ENCODE measurements at regions of chr20 and their contacts with region 1.

Region 1: GRCh38 chr20:51306503-51307358 is 235.8 kb downstream of the NFATC2 start:
- DNase-seq: peak; percentile 87
- ATAC-seq: peak; percentile 72
- H3K4me3 Mint-ChIP-seq: no peak overlapping the region
- H3K27ac Mint-ChIP-seq: 0 out of 2 replicates have a peak overlapping the region, but pooled peaks have one; percentile 80
- H3K4me1 Mint-ChIP-seq: peaks cover 61% of the 10 kb centered on the region
- H3K27me3 Mint-ChIP-seq: peaks cover 43% of the 10 kb centered on the region
- CTCF ChIP-seq: peak; percentile 88

Region 2: DNA sequence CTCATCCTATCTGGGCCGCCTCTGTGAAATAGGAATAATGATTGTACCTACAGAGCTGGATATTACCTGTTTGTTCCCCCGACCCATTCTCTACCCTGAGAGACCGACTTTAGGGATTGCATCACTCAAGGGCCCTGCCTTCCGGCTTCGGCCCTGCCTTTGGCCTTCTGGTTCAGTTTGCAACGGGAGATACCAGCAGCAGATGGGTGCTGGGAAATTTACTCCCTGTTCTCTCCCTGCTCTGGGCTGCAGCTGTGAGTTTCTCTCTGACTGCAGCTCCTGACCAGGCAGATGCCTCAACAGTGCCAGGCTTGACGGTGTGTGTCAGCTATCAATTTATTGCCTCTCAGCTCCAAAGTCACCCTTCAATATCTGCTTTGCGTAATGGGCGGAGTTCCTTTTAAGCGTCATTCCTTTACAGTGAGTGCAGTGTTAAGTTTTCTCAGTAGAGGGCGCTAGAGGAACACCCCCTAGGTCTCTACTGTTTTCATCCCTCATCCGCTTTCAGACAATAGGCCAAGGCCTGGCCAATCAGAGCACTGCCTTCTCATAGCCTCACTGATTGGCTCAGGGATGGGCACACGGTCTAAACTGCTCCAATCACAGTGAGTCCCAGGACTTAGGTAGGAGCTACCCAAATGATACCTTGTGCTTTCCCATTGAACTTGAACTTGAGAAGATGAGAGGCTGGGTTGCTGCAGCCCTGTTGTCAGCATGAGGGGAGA is 313.8 kb before region 1 on chr20:
- CTCF ChIA-PET with region 1: interaction called, 246 read pairs
- POLR2A ChIA-PET with region 1: interaction called, 3 read pairs
- DNase-seq: peak; percentile 74
- ATAC-seq: peak; percentile 91
- H3K4me3 Mint-ChIP-seq: peak overlapping the region; percentile 52
- H3K27ac Mint-ChIP-seq: peak overlapping the region; percentile 98
- H3K4me1 Mint-ChIP-seq: peaks cover 40% of the 10 kb centered on the region
- H3K27me3 Mint-ChIP-seq: peaks cover 5% of the 10 kb centered on the region
- CTCF ChIP-seq: peak; percentile 89

Region 3: GRCh38 chr20:51042654-51043247 is 264.0 kb before region 1 on chr20:
- CTCF ChIA-PET with region 1: interaction called, 13 read pairs
- POLR2A ChIA-PET with region 1: no interaction called
- DNase-seq: peak; percentile 65
- ATAC-seq: peak; percentile 93
- H3K4me3 Mint-ChIP-seq: no peak overlapping the region
- H3K27ac Mint-ChIP-seq: no peak overlapping the region
- H3K4me1 Mint-ChIP-seq: no peaks in the 10 kb centered on the region
- H3K27me3 Mint-ChIP-seq: no peaks in the 10 kb centered on the region; the same call in 1 of the 2 replicates
- CTCF ChIP-seq: 0 out of 2 replicates have a peak, but pooled peaks have one; percentile 27

Region 4: DNA sequence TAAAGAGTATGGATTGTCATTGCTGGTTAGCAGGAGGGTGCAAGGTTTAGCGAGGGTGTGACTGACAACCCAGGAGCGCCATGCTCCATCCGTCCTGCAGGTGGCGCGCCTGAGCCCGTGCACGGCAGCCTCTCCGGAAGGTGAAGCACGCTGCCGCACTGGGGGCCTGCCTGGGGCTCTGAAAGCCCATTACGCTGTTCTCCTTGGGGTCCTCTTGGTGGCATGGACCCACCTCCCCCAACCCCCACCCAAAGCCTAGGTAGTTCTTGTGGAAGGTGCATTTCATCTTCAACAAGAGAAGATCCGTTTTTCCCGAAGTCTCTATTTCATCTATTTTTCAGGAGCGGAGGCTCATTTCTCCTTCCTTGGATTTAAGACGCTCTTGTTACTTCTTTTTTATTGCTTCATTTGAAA is 86.4 kb before region 1 on chr20:
- CTCF ChIA-PET with region 1: interaction called, 11 read pairs
- POLR2A ChIA-PET with region 1: no interaction called
- DNase-seq: peak; percentile 81
- ATAC-seq: peak; percentile 81
- H3K4me3 Mint-ChIP-seq: no peak overlapping the region
- H3K27ac Mint-ChIP-seq: no peak overlapping the region
- H3K4me1 Mint-ChIP-seq: peaks cover 35% of the 10 kb centered on the region
- H3K27me3 Mint-ChIP-seq: peaks cover 21% of the 10 kb centered on the region
- CTCF ChIP-seq: peak; percentile 96

Region 5: GRCh38 chr20:51318058-51318895 is 11.5 kb after region 1 on chr20:
- CTCF ChIA-PET with region 1: interaction called, 89 read pairs
- POLR2A ChIA-PET with region 1: interaction called, 4 read pairs
- DNase-seq: peak; percentile 92
- ATAC-seq: peak; percentile 95
- H3K4me3 Mint-ChIP-seq: no peak overlapping the region
- H3K27ac Mint-ChIP-seq: peak overlapping the region; percentile 47; the same call in 1 of the 2 replicates
- H3K4me1 Mint-ChIP-seq: peaks cover 38% of the 10 kb centered on the region
- H3K27me3 Mint-ChIP-seq: peaks cover 24% of the 10 kb centered on the region
- CTCF ChIP-seq: peak; percentile 96

Region 6: DNA sequence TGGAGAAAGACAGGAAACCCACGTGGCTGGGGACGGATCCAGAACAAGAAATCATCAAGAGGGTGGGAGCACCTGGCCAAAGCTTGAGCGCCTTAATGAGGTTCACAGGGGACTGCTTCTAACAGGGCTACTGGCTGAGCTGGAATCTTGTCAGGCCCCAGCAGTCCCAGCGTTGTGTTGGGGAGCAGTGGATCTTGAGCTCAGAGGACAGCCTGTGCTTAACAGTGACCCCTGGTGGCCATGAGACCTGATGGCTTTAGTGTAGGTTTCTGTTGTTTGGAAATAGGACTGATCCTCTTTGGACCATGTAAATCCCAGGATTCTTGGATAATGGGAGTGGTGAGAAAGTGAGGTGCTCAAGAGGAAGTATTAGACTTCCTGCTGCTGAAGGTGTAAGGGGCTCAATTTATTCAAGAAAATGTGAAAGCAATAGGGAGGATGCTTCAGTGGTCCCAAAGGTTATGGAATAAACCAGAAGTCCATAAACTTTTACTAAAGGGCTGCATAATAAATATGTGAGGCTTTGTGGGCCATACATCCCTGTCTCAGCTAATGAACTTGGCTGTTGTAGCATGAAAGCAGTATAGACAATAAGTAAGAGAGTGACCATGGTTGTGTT is 19.6 kb after region 1 on chr20:
- CTCF ChIA-PET with region 1: interaction called, 66 read pairs
- POLR2A ChIA-PET with region 1: no interaction called
- DNase-seq: peak; percentile 76
- ATAC-seq: peak; percentile 91
- H3K4me3 Mint-ChIP-seq: no peak overlapping the region
- H3K27ac Mint-ChIP-seq: no peak overlapping the region
- H3K4me1 Mint-ChIP-seq: peaks cover 16% of the 10 kb centered on the region
- H3K27me3 Mint-ChIP-seq: peaks cover 3% of the 10 kb centered on the region; the same call in 1 of the 2 replicates
- CTCF ChIP-seq: peak; percentile 37; the same call in 1 of the 2 replicates

Region 7: GRCh38 chr20:51678026-51678697 is 371.4 kb after region 1 on chr20:
- CTCF ChIA-PET with region 1: no interaction called
- POLR2A ChIA-PET with region 1: no interaction called
- DNase-seq: no peak
- ATAC-seq: no peak; the same call in 1 of the 2 replicates
- H3K4me3 Mint-ChIP-seq: no peak overlapping the region
- H3K27ac Mint-ChIP-seq: no peak overlapping the region
- H3K4me1 Mint-ChIP-seq: peaks cover 13% of the 10 kb centered on the region
- H3K27me3 Mint-ChIP-seq: no peaks in the 10 kb centered on the region
- CTCF ChIP-seq: no peak

Measured in WTC11 (cell line).